ENCODE measurements at regions of chr2 and their contacts with region 1.

Region 1: DNA sequence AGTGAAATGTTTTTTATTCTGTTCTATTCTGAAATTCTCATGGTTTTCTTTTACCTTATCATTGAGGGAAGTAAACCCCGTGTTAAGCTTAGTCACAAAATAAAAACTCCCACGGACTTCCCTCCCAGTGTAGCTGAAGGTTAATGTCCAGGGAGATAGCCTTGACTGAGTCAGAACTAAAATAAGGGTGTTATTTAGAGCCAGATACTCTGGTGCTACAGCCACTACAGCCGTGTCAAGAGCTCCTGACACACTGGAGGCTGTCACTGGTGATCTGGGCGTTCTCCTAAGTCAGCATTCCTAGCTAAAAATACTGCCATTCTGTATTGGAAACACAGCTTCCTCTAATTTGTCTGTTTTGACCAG is 82.0 kb upstream of the RANBP2 start:
- H3K4me3 Mint-ChIP-seq: no peak overlapping the region
- H3K27ac Mint-ChIP-seq: peak overlapping the region; percentile 68
- H3K4me1 Mint-ChIP-seq: peaks cover 95% of the 10 kb centered on the region
- H3K27me3 Mint-ChIP-seq: no peaks in the 10 kb centered on the region

Region 2: GRCh38 chr2:108594132-108594981 is 42.9 kb before region 1 on chr2:
- intact Hi-C with region 1: loop called (anchors 5 kb)
- H3K4me3 Mint-ChIP-seq: peak overlapping the region; percentile 60
- H3K27ac Mint-ChIP-seq: peak overlapping the region; percentile 100
- H3K4me1 Mint-ChIP-seq: peaks cover 68% of the 10 kb centered on the region
- H3K27me3 Mint-ChIP-seq: no peaks in the 10 kb centered on the region

Region 3: DNA sequence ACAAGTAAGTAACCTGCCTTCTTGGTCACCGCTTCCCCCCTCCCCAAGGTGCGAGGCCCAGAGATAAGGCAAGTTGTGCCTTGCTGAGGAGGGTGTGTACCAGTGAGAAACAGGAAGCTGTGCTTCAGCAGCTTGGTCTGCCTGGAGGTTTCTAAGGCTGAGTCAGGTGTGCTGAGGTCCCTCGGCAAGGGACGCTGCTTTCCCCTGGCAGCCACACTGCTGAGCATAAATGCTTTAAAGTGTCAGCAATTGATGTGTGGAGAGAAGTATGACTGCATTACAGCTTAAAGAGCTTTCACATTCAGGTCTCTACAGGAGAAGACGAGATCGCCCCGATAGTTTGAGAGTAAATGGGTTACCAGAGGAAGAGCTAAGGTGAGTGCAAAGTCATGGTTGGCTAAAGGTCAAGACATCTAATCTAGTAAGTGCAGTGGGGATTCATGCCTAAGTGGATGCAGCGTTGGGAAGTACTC is 16.2 kb before region 1 on chr2:
- intact Hi-C with region 1: loop called (anchors 2 kb)
- H3K4me3 Mint-ChIP-seq: peak overlapping the region; percentile 71
- H3K27ac Mint-ChIP-seq: peak overlapping the region; percentile 91
- H3K4me1 Mint-ChIP-seq: peaks cover 63% of the 10 kb centered on the region
- H3K27me3 Mint-ChIP-seq: no peaks in the 10 kb centered on the region

Measured in dendritic cell treated with granulocyte-macrophage colony-stimulating factor and Interleukin-4, amounts not matched to agents 40 ng/mL and 50 ng/mL, for 4 days (primary cell).